ENCODE measurements at regions of chr3 and their contacts with region 1.

Region 1: DNA sequence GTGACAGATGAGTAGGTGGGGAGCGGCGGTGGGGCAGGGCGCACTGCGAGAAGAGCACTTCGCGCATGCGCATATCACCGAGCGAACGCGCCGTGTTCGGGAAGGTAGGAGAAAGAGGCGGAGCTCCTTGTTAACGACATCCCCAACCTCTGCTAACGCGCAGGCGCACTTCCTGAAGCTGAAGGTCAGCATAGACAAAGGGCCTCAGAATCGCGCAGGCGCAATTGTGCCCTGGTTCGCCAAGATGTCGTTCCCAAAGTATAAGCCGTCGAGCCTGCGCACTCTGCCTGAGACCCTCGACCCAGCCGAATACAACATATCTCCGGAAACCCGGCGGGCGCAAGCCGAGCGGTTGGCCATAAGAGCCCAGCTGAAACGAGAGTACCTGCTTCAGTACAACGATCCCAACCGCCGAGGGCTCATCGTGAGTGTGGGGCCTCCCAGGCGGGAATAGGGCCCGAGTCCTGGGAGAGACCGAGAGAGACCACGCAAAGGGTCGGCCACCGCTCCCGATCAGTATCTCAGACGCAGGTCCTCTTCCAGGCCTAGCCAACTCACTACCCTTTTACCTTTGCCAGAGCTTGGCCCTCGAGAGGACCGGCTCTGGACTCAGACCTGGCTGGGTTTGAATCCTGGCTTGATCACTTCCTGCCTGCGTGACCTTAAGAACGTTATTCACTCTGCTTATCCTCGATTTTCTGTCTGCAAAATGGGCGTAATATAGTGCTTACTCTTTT is at the start of gene NDUFB4:
- DNase-seq: peak; percentile 97 to 99 (median 99)
- ATAC-seq: peak; percentile 99
- H3K4me3 ChIP-seq: peak within 1 kb of the TSS; percentile 61 to 94 (median 76)
- H3K27ac ChIP-seq: peak within 1 kb of the TSS; percentile 83 to 98 (median 94)
- H3K4me1 ChIP-seq: peaks cover 11 to 47% (median 34%) of the 10 kb centered on the region in 12 donors
- H3K27me3 ChIP-seq: no peaks in the 10 kb centered on the region
- CTCF ChIP-seq: no peak
- POLR2A ChIP-seq: peak; percentile 26 to 74
- total RNA-seq, gene NDUFB4: 283 to 596 (median 505) TPM

Region 2: DNA sequence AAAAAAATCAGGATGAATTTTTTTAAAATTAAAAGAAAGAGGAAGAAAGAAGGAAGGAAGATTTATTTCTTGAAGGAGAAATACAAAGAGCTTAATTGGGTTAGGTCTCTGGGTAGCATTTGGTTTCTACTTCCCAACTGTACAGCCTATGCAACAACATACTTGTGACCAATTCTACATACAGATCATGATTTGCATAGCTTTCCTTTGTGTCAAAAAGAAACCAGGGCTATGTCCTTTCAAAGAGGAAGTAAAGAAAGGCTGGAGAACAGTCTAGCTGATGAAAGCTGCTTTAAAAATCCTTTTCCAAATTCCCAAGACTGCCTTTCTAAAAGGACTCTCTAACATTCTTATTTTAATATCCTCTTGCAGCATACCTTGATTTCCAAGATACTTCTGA is 91.8 kb after region 1 on chr3:
- intact Hi-C with region 1: no loop called
- DNase-seq: no peak
- ATAC-seq: peak in 3 of 4 donors; percentile 24 to 48 (median 46)
- H3K4me3 ChIP-seq: no peak overlapping the region
- H3K27ac ChIP-seq: peak overlapping the region in 1 of 12 donors; percentile 5
- H3K4me1 ChIP-seq: peaks cover 0 to 7% (median 0%) of the 10 kb centered on the region in 12 donors
- H3K27me3 ChIP-seq: no peaks in the 10 kb centered on the region
- CTCF ChIP-seq: no peak
- POLR2A ChIP-seq: no peak

Region 3: DNA sequence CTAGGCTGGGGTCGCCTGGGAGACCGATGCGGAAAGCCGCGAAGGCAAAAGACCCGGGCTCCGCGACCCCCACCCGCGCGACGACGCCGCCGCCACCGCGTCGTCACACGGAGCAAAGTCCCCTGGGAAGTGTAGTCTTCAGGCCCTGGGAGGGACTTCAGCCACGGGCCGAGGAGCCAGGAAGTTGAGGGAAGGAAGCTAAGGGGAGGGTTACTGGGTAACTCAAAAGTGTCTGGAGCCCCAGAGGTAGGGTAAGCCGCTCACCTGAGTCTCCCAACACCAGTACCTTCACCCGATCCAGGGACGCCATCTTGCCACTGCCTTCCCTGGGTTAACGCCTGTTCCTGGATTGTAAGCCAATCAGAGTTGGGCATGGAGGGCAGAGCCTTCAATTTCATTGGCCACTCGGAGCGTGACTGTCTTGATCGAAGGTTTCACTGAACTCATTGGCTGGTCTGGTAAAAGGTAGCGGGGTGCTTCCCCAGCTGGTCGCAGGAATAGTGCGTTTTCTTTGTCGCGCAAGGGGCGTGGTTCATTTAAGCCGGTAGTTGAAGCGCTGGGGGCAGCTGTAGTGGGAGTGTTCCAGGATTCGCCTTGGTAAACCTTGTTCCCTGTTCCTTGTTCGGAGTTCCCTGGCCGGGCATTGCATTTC is 146.0 kb after region 1 on chr3 and contains the starts of genes GTF2E1 and RABL3:
- intact Hi-C with region 1: loop called in 9 of 10 experiments (anchors 1 to 10 kb)
- DNase-seq: peak; percentile 95 to 98 (median 97)
- ATAC-seq: peak; percentile 100
- H3K4me3 ChIP-seq: peak within 1 kb of the TSS; percentile 59 to 97 (median 85)
- H3K27ac ChIP-seq: peak within 1 kb of the TSS; percentile 83 to 98 (median 93)
- H3K4me1 ChIP-seq: peaks cover 0 to 29% (median 17%) of the 10 kb centered on the region in 12 donors
- H3K27me3 ChIP-seq: no peaks in the 10 kb centered on the region
- CTCF ChIP-seq: no peak
- POLR2A ChIP-seq: peak in 1 of 2 donors; percentile 64
- total RNA-seq, gene GTF2E1: 7.3 to 15.1 (median 12.2) TPM
- total RNA-seq, gene RABL3: 6.8 to 28.3 (median 17.5) TPM

Measured in heart left ventricle (tissue), 16 donors.